Mucosa of descending colon (tissue), 3 donors: ENCODE measurements at regions of chr18 and their contacts with region 1.

Region 1: DNA sequence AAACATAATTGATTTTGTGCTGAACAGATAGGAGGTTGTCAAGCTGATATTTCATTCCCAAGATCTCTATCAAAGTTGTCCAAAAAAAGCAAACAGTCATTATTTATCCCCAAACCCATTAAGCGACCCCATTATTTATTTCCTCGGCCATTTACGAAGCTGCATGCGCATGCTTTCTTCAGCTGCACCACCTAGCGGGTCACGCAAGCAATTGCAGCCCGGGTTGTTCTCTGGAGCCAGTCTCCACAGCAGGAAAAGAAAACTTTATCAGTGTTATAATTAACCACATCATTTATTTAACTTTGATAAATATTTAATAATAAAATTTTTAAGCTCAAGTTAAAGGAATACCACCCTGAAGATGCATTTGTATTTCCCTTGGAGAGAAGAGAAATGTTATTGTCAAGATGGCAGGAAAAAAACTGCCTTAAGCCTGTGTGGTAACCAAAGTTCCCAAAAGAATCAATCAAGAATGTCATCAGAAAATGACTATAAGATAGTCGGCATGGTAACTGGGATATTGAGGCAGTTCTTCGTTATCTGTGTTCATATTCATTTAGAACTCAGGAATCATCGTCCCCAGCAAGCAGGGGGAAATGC is 304.7 kb downstream of the FBXO15 start:
- DNase-seq: peak in 1 of 3 donors; percentile 62
- ATAC-seq: peak; percentile 46
- H3K4me3 ChIP-seq: no peak overlapping the region
- H3K4me1 ChIP-seq: no peaks in the 10 kb centered on the region
- CTCF ChIP-seq: peak; percentile 87

Region 2: DNA sequence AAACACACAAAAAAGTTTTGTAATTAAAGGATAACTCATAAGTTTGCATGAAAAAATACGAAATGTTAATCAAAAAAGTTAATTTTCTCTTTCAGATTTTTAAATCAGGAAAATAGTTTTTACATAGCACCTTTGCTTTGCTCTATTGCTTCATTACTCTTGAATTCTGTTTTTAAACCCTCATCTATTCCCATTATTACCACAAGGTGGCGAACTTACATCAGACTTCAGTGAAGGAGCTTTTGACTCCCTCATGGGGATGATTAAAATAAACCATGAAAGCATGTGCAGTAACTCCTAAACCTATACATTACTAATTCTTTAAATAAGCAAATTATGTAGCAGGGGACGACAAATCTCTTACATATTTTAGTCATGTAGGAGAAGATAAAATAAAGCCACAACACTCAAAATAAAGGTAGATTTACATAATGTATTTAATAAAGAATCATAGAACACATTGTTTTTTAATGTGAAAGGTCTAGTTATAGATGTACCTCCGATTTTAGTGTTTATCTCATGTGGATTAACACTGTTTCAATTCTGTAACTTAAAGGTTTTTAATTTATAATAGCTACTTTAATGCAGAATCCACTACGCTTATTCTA is 1080.3 kb before region 1 on chr18:
- intact Hi-C with region 1: loop called in 1 of 2 experiments (anchors 5 kb)
- DNase-seq: peak in 1 of 3 donors; percentile 6
- ATAC-seq: no peak
- H3K4me3 ChIP-seq: no peak overlapping the region
- H3K4me1 ChIP-seq: no peaks in the 10 kb centered on the region
- CTCF ChIP-seq: peak; percentile 32